WTC11 (cell line): ENCODE measurements at regions of chr10 and their contacts with region 1.

Region 1: DNA sequence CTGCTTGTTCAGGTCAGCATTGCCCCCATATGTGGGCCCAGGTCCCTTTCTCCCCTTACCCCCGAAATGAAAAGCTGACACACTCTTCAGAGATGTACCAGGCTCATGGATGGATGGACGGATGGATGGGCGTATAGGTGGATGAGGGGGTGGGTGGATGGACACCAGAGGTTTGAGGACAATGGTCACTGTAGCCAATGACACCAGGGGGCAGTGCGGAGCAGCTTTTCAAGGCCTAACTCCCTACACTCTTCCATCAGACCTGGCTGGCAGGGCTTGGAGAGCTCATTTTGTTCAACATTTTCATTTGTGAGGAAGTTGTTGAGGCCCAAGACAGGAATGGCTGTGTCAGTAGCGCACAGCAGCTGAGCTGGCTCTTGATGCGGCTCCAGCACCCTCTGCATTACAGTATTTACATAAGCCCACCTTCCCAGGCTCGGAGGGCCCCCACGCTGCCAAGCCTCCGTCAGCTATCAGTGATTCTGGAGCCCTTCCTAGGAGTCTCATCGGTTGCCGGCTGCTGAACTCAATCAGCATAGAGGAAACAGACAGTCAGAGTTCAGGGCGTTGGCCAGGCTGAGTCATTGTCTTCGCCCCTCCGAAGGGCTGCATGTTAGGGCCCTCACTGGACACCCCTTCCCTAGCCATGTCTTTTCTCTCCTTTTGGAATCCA is 11.6 kb upstream of the FFAR4 start:
- DNase-seq: peak; percentile 85
- ATAC-seq: peak; percentile 95
- H3K4me3 Mint-ChIP-seq: 0 out of 2 replicates have a peak overlapping the region, but pooled peaks have one; percentile 0
- H3K27ac Mint-ChIP-seq: no peak overlapping the region
- H3K4me1 Mint-ChIP-seq: peaks cover 11% of the 10 kb centered on the region
- H3K27me3 Mint-ChIP-seq: no peaks in the 10 kb centered on the region
- CTCF ChIP-seq: peak; percentile 71

Region 2: DNA sequence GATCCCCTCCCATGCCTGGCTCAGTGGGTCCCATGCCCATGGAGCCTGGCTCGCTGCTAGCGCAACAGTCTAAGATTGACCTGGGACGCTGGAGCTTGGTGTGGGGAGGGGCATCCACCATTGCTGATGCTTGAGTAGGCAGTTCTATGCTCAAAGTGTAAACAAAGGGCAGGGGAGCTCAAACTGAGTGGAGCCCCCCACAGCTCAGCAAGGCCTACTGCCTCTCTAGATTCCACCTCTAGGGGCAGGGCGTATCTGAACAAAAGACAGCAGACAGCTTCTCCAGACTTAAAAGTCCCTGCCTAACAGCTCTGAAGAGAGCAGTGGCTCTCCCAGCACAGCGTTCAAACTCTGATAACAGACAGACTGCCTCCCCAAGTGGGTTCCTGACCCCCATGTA is 19.6 kb before region 1 on chr10:
- CTCF ChIA-PET with region 1: interaction called, 29 read pairs
- POLR2A ChIA-PET with region 1: no interaction called
- DNase-seq: peak; percentile 44
- ATAC-seq: peak; percentile 85
- H3K4me3 Mint-ChIP-seq: no peak overlapping the region
- H3K27ac Mint-ChIP-seq: no peak overlapping the region
- H3K4me1 Mint-ChIP-seq: 0 out of 2 replicates have a peak, but pooled peaks cover 2% of the 10 kb centered on the region
- H3K27me3 Mint-ChIP-seq: peaks cover 33% of the 10 kb centered on the region
- CTCF ChIP-seq: no peak

Region 3: GRCh38 chr10:93566435-93567276 is 11.8 kb after region 1 on chr10 and contains the start of gene FFAR4:
- CTCF ChIA-PET with region 1: interaction called, 18 read pairs
- POLR2A ChIA-PET with region 1: no interaction called
- DNase-seq: peak; percentile 62
- ATAC-seq: peak; percentile 67
- H3K4me3 Mint-ChIP-seq: peak within 1 kb of the TSS; percentile 86
- H3K27ac Mint-ChIP-seq: no peak within 1 kb of the TSS
- H3K4me1 Mint-ChIP-seq: peaks cover 21% of the 10 kb centered on the region
- H3K27me3 Mint-ChIP-seq: peaks cover 83% of the 10 kb centered on the region
- CTCF ChIP-seq: no peak
- total RNA-seq, gene FFAR4: 0.07 to 0.15 TPM in 2 of 3 replicates, not detected in the other

Region 4: GRCh38 chr10:93600446-93601145 is 45.7 kb after region 1 on chr10:
- CTCF ChIA-PET with region 1: interaction called, 21 read pairs
- POLR2A ChIA-PET with region 1: no interaction called
- DNase-seq: peak; percentile 29
- ATAC-seq: peak; percentile 12
- H3K4me3 Mint-ChIP-seq: peak overlapping the region; percentile 70
- H3K27ac Mint-ChIP-seq: no peak overlapping the region
- H3K4me1 Mint-ChIP-seq: peaks cover 11% of the 10 kb centered on the region
- H3K27me3 Mint-ChIP-seq: peaks cover 58% of the 10 kb centered on the region
- CTCF ChIP-seq: no peak

Region 5: DNA sequence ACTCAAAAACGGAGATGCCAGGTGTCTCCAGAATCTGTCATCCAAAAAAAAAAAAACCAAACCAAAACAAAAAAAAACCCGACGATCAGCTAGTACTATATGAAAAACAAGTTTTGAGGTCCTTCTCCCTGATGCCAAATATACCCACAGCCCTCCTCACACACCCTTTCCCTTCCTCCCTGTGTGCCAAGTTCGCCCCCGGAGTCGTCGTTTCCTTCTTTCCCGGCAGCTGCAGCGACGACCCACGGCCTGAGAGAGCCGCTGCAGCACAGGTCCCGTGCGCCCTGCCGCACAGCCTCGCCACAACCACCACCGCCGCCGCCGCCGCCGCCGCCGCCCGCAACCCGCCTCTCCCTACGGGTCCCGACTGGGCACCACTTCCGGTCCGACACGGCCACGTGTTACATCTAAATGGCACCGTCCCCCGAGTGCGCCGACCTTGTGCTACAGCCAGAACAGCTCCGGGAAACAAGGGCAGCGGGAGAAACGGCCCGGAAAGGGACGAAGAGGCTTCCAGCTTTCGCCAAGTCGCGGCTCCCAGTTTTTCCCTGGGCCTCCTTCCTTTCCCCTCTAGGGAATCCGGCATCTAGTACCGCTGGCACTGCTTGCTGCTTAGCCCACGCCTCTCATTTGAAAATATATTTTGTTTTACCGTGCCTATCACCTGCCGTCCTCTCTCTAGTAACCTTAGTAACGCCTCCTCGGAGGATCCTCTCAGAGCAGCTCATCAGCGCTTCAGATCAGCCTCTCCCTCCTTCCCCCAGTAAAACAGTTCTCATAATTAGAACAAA is 147.5 kb after region 1 on chr10 and contains the start of gene FRA10AC1:
- CTCF ChIA-PET with region 1: interaction called, 20 read pairs
- POLR2A ChIA-PET with region 1: no interaction called
- DNase-seq: peak; percentile 90
- ATAC-seq: peak; percentile 94
- H3K4me3 Mint-ChIP-seq: no peak within 1 kb of the TSS
- H3K27ac Mint-ChIP-seq: no peak within 1 kb of the TSS
- H3K4me1 Mint-ChIP-seq: peaks cover 14% of the 10 kb centered on the region
- H3K27me3 Mint-ChIP-seq: peaks cover under 1% of the 10 kb centered on the region
- CTCF ChIP-seq: no peak
- total RNA-seq, gene FRA10AC1: 12.9 to 15.8 TPM (median 14.1 TPM) in 3 replicates